Sigmoid colon (tissue), 7 donors: ENCODE measurements at regions of chrX and their contacts with region 1.

Region 1: DNA sequence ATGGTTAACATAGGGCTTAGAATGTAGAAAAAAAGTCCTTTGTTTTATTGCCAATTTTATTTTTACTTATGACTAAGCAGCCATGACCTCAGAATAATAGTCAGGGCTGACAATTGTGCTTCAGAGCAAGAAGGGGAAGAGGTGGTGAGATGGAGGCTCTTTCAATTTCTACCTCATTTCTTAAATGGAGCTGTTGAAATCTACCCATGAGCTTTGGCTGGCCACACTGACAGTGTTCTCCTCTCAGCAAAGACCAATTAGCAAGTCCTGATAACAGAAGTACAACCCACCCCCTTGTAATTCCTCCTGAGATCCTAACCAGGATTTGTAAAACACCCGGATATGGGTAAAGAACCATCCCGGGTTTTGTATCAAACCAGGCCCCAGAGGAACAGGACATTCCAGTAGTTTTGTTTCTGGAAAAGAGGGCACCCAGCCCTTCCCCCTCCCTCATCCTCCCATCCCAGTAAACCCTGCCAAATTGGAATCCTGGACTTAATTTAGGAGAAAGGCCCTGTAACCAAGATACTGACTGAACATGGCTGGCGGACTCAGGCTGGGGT is at the start of gene HEPH:
- DNase-seq: no peak
- H3K4me3 ChIP-seq: peak within 1 kb of the TSS; percentile 25 to 51 (median 44)
- H3K27ac ChIP-seq: peak within 1 kb of the TSS; percentile 51 to 78 (median 74)
- H3K4me1 ChIP-seq: no peaks in the 10 kb centered on the region
- H3K27me3 ChIP-seq: no peaks in the 10 kb centered on the region
- CTCF ChIP-seq: no peak
- EP300 ChIP-seq: no peak
- POLR2A ChIP-seq: no peak
- total RNA-seq, gene HEPH: 78.2 to 152 (median 115) TPM

Region 2: GRCh38 chrX:65697915-65698796 is 465.8 kb before region 1 on chrX:
- intact Hi-C with region 1: loop called (anchors 10 kb)
- DNase-seq: no peak
- H3K4me3 ChIP-seq: no peak overlapping the region
- H3K27ac ChIP-seq: peak overlapping the region; percentile 56 to 70 (median 66)
- H3K4me1 ChIP-seq: peaks cover 0 to 71% (median 53%) of the 10 kb centered on the region in 4 donors
- H3K27me3 ChIP-seq: no peaks in the 10 kb centered on the region
- CTCF ChIP-seq: no peak
- EP300 ChIP-seq: no peak
- POLR2A ChIP-seq: no peak